Activated T-helper 2 cell treated with anti-CD3 and anti-CD28 coated beads, Interferon-gamma antibody, Interleukin-2, Interleukin-4, amounts not matched to agents 10 μg/mL and 5 μg/mL and 100 μg/mL, durations not matched to agents 14 hours and 24 hours and 36 hours (primary cell): ENCODE measurements at regions of chr15 and their contacts with region 1.

Region 1: GRCh38 chr15:52227456-52227855 is 36.3 kb upstream of the GNB5 start:
- DNase-seq: peak; percentile 65
- H3K4me3 Mint-ChIP-seq: no peak overlapping the region
- H3K27ac Mint-ChIP-seq: no peak overlapping the region
- H3K4me1 Mint-ChIP-seq: peaks cover 21% of the 10 kb centered on the region
- H3K27me3 Mint-ChIP-seq: no peaks in the 10 kb centered on the region

Region 2: GRCh38 chr15:51888593-51889195 is 338.8 kb before region 1 on chr15:
- intact Hi-C with region 1: loop called (anchors 1 kb)
- DNase-seq: no peak
- H3K4me3 Mint-ChIP-seq: no peak overlapping the region
- H3K27ac Mint-ChIP-seq: no peak overlapping the region
- H3K4me1 Mint-ChIP-seq: peaks cover 6% of the 10 kb centered on the region
- H3K27me3 Mint-ChIP-seq: no peaks in the 10 kb centered on the region

Region 3: DNA sequence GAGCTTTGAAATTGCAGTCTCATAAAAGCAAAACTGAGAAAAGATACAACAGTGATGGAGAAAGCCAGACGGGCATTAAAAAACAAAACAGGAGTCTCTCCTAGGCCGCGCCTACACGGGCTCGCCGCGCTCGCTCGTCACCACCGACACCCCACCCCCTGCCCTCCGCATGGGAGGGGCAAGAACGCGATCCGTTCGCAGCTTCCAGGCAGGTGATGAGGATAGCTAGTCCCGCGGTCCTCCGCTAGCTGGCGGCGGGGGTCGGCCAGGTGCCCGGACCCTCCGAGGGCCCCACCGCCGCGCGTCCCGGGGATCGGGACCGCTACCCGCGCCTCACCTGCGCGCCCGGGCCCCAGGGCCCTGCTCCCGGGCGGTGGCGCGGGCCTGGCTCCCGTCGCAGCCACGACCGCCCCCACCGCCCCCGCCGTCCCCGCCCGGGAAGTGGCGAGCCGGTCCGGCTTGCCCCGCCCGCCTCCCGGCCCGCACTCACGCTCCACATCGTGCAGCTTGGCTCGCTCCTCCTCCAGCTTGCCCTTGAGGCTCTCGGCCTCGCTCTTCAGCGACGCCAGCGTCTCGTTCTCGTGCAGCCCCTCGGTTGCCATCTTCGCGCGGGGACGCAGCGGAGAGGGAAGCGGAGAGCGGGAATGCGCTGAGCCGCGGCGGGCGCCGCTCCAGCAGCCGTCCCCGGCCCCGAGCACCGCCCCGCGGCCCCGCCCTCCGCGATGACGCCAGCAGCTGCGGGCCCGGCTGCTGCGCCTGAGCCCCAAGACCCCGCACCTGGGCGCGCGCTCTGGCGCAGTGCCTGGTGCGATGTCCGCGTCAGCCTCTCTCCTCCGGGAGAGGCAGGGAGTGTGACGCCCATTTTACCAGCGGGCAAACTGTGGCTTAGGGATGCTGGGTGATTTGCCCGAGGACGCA is 47.9 kb before region 1 on chr15:
- intact Hi-C with region 1: loop called (anchors 2 kb)
- DNase-seq: peak; percentile 90
- H3K4me3 Mint-ChIP-seq: peak overlapping the region; percentile 92
- H3K27ac Mint-ChIP-seq: peak overlapping the region; percentile 96
- H3K4me1 Mint-ChIP-seq: peaks cover 32% of the 10 kb centered on the region
- H3K27me3 Mint-ChIP-seq: no peaks in the 10 kb centered on the region